Mammary epithelial cell (primary cell): ENCODE measurements at regions of chr4 and their contacts with region 1.

Region 1: GRCh38 chr4:147741190-147741785 is 9.4 kb downstream of the ARHGAP10 start:
- DNase-seq: peak; percentile 29
- H3K4me3 ChIP-seq: no peak overlapping the region
- H3K27ac ChIP-seq: no peak overlapping the region
- H3K4me1 ChIP-seq: peaks cover 20% of the 10 kb centered on the region
- H3K27me3 ChIP-seq: no peaks in the 10 kb centered on the region
- CTCF ChIP-seq: no peak

Region 2: GRCh38 chr4:147160908-147161513 is 580.3 kb before region 1 on chr4:
- CTCF ChIA-PET with region 1: no interaction called
- dilution Hi-C with region 1: no loop called
- in situ Hi-C with region 1: no loop called
- intact Hi-C with region 1: no loop called
- DNase-seq: peak; percentile 49
- H3K4me3 ChIP-seq: no peak overlapping the region
- H3K27ac ChIP-seq: no peak overlapping the region
- H3K4me1 ChIP-seq: peaks cover 9% of the 10 kb centered on the region
- H3K27me3 ChIP-seq: no peaks in the 10 kb centered on the region
- CTCF ChIP-seq: peak; percentile 84 to 89

Region 3: GRCh38 chr4:147755561-147756295 is 14.4 kb after region 1 on chr4:
- CTCF ChIA-PET with region 1: no interaction called
- dilution Hi-C with region 1: no loop called
- in situ Hi-C with region 1: no loop called
- intact Hi-C with region 1: loop called (anchors 2 kb)
- DNase-seq: peak; percentile 17
- H3K4me3 ChIP-seq: no peak overlapping the region
- H3K27ac ChIP-seq: no peak overlapping the region
- H3K4me1 ChIP-seq: peaks cover 26% of the 10 kb centered on the region
- H3K27me3 ChIP-seq: no peaks in the 10 kb centered on the region
- CTCF ChIP-seq: no peak